ENCODE measurements at regions of chr1 and their contacts with region 1.

Region 1: GRCh38 chr1:7770997-7771822 is at the start of gene VAMP3:
- DNase-seq: peak; percentile 76
- H3K4me3 Mint-ChIP-seq: peak within 1 kb of the TSS; percentile 84
- H3K27ac Mint-ChIP-seq: peak within 1 kb of the TSS; percentile 80
- H3K4me1 Mint-ChIP-seq: peaks cover 10% of the 10 kb centered on the region
- H3K27me3 Mint-ChIP-seq: peaks cover 40% of the 10 kb centered on the region
- CTCF ChIP-seq: no peak
- total RNA-seq, gene VAMP3: 58.6 and 79.6 TPM in 2 replicates

Region 2: DNA sequence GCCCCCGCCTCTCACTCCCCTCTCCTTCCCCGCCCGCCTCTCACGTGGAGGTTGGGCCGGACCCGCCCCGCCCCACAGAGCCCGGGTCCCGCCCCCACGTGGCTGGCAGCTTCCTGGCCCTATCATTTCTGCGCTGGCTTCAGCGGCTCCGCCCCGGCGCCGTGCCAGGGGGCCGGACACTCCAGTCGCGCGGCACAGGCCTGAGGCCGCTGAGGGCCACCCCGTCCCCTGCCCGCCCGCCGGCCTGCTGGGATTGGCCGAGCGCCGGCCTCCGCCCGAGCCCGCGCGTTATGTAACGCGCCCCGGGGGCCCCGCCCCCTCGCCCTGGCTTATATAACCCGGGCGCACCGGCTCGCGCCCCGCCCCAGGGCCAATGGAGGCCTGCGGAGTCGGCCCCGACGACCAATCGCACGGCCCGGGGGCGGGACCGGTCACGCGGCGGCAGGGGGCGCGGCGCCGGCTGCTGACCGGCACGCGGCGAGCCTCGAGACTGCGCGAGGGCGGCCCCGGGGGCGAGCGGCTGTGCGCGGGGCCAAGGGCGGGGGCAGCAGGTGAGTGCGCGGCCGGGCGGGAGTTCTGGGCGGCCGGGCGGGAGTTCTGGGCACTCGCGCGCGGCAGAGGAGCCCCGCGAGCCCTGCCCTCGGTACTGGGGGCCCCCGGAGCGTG is 12.7 kb after region 1 on chr1 and contains the start of gene PER3:
- CTCF ChIA-PET with region 1: no interaction called
- POLR2A ChIA-PET with region 1: interaction called, 12 read pairs
- intact Hi-C with region 1: no loop called
- DNase-seq: peak; percentile 94
- H3K4me3 Mint-ChIP-seq: peak within 1 kb of the TSS; percentile 65
- H3K27ac Mint-ChIP-seq: no peak within 1 kb of the TSS
- H3K4me1 Mint-ChIP-seq: no peaks in the 10 kb centered on the region
- H3K27me3 Mint-ChIP-seq: no peaks in the 10 kb centered on the region
- CTCF ChIP-seq: no peak
- total RNA-seq, gene PER3: 0.84 and 1.9 TPM in 2 replicates